SK-N-SH (cell line): ENCODE measurements at regions of chr19 and their contacts with region 1.

Region 1: GRCh38 chr19:21328885-21329605 is at the start of gene ZNF708:
- DNase-seq: peak; percentile 90
- H3K4me3 ChIP-seq: peak within 1 kb of the TSS; percentile 81 to 83
- H3K27ac ChIP-seq: peak within 1 kb of the TSS; percentile 93 to 96
- H3K4me1 ChIP-seq: peaks cover 0 to 4% of the 10 kb centered on the region in 2 experiments; a peak in 3 of 4 replicates
- H3K27me3 ChIP-seq: no peaks in the 10 kb centered on the region
- CTCF ChIP-seq: no peak
- EP300 ChIP-seq: peak in 1 of 2 experiments; percentile 33; a peak in 1 of 4 replicates
- RAD21 ChIP-seq: 0 out of 2 replicates have a peak, but pooled peaks have one; percentile 5
- polyA plus RNA-seq, gene ZNF708: 1.0 and 1.8 TPM in 2 replicates

Region 2: GRCh38 chr19:21092109-21092508 is 236.9 kb before region 1 on chr19:
- CTCF ChIA-PET with region 1: no interaction called
- POLR2A ChIA-PET with region 1: no interaction called
- DNase-seq: no peak
- H3K4me3 ChIP-seq: no peak overlapping the region
- H3K27ac ChIP-seq: peak overlapping the region in 1 of 2 experiments; percentile 23; a peak in 1 of 4 replicates
- H3K4me1 ChIP-seq: peaks cover 0 to 2% of the 10 kb centered on the region in 2 experiments; a peak in 2 of 4 replicates
- H3K27me3 ChIP-seq: no peaks in the 10 kb centered on the region
- CTCF ChIP-seq: no peak
- EP300 ChIP-seq: no peak
- RAD21 ChIP-seq: no peak

Region 3: DNA sequence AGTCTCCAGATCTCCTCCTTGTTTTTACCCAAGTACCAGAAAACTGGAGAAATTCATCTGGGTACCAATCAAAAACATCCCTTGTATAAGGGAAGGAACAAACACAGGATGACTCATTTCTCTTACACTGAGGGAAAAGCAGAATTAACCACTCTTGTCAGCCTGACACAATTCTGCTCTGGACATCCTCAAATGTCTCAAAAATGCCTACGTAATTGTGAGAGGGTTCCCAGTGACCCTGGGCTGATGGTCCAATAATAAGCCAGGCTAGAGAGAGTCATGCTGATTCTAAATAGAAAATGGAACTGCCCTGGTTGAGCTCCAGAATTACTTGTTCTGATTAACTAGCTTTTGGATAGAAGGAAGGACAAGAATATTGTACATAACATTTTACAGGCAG is 14.4 kb before region 1 on chr19:
- CTCF ChIA-PET with region 1: no interaction called
- POLR2A ChIA-PET with region 1: interaction called, 10 read pairs
- DNase-seq: peak; percentile 6
- H3K4me3 ChIP-seq: no peak overlapping the region
- H3K27ac ChIP-seq: peak overlapping the region; percentile 31 to 39; a peak in 1 of 4 replicates
- H3K4me1 ChIP-seq: peaks cover 0 to 4% of the 10 kb centered on the region in 2 experiments; a peak in 2 of 4 replicates
- H3K27me3 ChIP-seq: no peaks in the 10 kb centered on the region
- CTCF ChIP-seq: no peak
- EP300 ChIP-seq: no peak
- RAD21 ChIP-seq: no peak

Region 4: DNA sequence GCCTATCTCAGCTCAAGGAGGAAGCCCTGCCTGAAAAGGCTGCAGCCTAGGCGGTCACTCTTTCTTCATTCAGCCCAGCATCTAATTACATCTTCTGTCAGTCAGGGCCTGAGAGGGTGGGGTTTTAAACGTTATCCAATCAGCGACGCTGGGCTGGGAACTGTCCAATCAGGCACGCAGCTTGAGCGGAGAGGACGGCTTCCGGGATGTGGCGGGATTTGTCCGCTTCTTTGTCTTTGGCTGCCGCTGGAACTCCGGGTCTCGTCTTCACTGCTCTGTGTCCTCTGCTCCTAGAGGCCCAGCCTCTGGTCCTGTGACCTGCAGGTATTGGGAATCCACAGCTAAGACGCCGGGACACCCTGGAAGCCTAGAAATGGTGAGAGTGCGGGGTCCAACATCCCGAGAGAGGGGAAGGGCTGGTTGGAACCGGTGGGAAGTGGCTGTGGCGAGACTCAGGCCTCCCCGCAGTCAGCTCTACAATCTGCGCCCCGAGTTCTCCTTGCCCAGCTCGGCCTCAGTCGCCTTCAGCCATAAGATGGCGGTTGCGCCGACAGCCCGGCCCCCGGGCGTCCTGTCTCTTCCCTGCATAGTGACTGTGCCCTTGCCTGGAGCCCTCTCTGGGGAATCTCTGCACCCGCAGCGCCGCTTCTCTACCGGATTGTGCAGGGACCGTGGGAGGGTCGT is 29.9 kb after region 1 on chr19 and contains the start of gene ZNF738:
- CTCF ChIA-PET with region 1: no interaction called
- POLR2A ChIA-PET with region 1: interaction called, 14 read pairs
- DNase-seq: peak; percentile 82
- H3K4me3 ChIP-seq: peak within 1 kb of the TSS; percentile 72 to 78
- H3K27ac ChIP-seq: peak within 1 kb of the TSS; percentile 76 to 77
- H3K4me1 ChIP-seq: no peaks in the 10 kb centered on the region
- H3K27me3 ChIP-seq: no peaks in the 10 kb centered on the region
- CTCF ChIP-seq: no peak
- EP300 ChIP-seq: no peak
- RAD21 ChIP-seq: no peak
- polyA plus RNA-seq, gene ZNF738: 8.1 and 12.8 TPM in 2 replicates

Region 5: GRCh38 chr19:21434967-21435544 is 106.0 kb after region 1 on chr19:
- CTCF ChIA-PET with region 1: no interaction called
- POLR2A ChIA-PET with region 1: no interaction called
- DNase-seq: peak; percentile 34
- H3K4me3 ChIP-seq: no peak overlapping the region
- H3K27ac ChIP-seq: no peak overlapping the region
- H3K4me1 ChIP-seq: no peaks in the 10 kb centered on the region; a peak in 1 of 4 replicates
- H3K27me3 ChIP-seq: no peaks in the 10 kb centered on the region
- CTCF ChIP-seq: no peak
- EP300 ChIP-seq: no peak
- RAD21 ChIP-seq: peak; percentile 50

Region 6: GRCh38 chr19:21454901-21455300 is 125.9 kb after region 1 on chr19:
- CTCF ChIA-PET with region 1: no interaction called
- POLR2A ChIA-PET with region 1: no interaction called
- DNase-seq: no peak
- H3K4me3 ChIP-seq: no peak overlapping the region
- H3K27ac ChIP-seq: no peak overlapping the region
- H3K4me1 ChIP-seq: no peaks in the 10 kb centered on the region
- H3K27me3 ChIP-seq: no peaks in the 10 kb centered on the region
- CTCF ChIP-seq: no peak
- EP300 ChIP-seq: no peak
- RAD21 ChIP-seq: no peak